Heart right ventricle (tissue), 16 donors: ENCODE measurements at regions of chr7 and their contacts with region 1.

Region 1: GRCh38 chr7:2519119-2519930 is at the start of gene LFNG:
- DNase-seq: peak; percentile 86 to 89
- ATAC-seq: peak; percentile 72 to 92 (median 84)
- H3K4me3 ChIP-seq: peak within 1 kb of the TSS; percentile 33 to 82 (median 66)
- H3K27ac ChIP-seq: peak within 1 kb of the TSS in 9 of 10 donors; percentile 11 to 87 (median 62)
- H3K4me1 ChIP-seq: peaks cover 20 to 73% (median 54%) of the 10 kb centered on the region in 9 donors
- H3K27me3 ChIP-seq: peaks cover 0 to 30% (median 6%) of the 10 kb centered on the region in 7 donors
- CTCF ChIP-seq: peak in 1 of 9 donors; percentile 10
- total RNA-seq, gene LFNG: 2.4 to 11.8 (median 9.0) TPM

Region 2: DNA sequence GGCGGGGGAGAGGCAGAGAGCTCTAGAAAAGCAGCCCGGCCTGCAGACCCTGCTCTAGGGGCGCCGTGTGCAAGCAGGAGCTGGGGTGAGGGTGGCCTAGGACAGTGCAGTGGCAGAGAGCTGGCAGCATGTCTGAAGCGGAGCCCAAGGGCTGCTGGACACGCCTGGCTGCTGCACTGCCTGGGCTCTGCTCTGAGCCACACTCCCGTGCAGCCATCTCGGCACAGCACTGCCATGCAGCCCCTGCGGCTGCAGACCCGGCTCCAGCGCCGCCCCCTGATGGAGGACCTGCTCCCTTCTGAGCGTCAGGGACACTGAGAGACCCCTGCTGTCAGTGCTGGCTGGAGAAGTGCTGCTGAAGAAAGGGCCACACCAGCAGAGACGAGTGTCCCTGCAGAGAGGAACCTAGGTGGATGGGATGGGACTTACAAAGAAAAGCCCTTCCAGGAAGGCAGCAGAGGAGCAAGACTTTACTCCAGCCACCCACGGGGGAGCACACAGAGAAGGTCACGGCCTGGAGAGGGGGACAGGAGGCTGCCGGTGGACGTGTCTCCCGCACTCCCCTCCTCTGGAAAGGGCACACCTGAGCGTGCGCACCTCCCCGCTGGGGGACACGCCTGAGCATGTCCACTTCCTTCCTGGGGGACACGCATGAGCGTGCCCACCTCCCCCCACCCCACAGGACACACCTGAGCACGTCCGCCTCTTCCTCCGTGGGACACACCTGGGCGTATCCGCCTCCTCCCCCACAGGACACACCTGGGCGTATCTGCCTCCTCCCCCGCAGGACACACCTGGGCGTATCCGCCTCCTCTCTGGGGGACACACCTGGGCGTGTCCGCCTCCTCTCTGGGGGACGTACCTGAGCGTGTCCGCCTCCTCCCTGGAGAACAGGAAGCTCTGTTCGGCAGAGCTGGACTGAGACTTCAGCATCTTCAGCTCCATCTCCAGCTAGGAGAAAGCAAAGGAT is 539.4 kb before region 1 on chr7:
- intact Hi-C with region 1: no loop called
- DNase-seq: peak in 1 of 2 donors; percentile 9
- ATAC-seq: peak in 3 of 8 donors; percentile 19 to 30 (median 20)
- H3K4me3 ChIP-seq: no peak overlapping the region
- H3K27ac ChIP-seq: no peak overlapping the region
- H3K4me1 ChIP-seq: peaks cover 0 to under 1% (median 0%) of the 10 kb centered on the region in 9 donors
- H3K27me3 ChIP-seq: no peaks in the 10 kb centered on the region
- CTCF ChIP-seq: no peak

Region 3: DNA sequence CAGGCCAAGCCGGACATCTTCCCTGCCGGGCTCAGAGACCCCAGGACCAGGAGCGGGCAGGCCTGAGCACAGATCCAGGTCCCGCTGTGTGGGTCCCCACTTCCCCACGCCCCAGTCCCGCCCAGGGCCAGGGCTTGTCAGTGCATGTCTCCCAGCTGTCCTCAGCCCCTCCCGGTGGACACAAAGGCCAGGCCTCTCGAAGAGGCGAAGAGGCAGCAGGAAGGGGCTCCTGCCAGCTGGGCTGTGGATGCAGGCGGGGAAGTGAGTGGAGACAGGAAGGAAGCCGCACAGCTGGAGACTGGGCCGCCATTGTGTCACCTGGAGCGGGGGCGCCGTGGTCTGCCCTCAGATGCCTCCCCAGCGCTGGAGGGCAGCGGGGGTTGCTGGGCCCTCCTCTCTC is 47.9 kb before region 1 on chr7:
- intact Hi-C with region 1: loop called in 4 of 10 experiments (anchors 5 kb)
- DNase-seq: peak; percentile 63 to 77
- ATAC-seq: peak; percentile 47 to 81 (median 72)
- H3K4me3 ChIP-seq: no peak overlapping the region
- H3K27ac ChIP-seq: peak overlapping the region in 6 of 10 donors; percentile 29 to 75 (median 37)
- H3K4me1 ChIP-seq: peaks cover 5 to 28% (median 10%) of the 10 kb centered on the region in 9 donors
- H3K27me3 ChIP-seq: peaks cover 0 to 19% (median 0%) of the 10 kb centered on the region in 7 donors
- CTCF ChIP-seq: no peak

Region 4: GRCh38 chr7:2477447-2478398 is 41.6 kb before region 1 on chr7:
- intact Hi-C with region 1: loop called in 5 of 10 experiments (anchors 5 kb)
- DNase-seq: peak; percentile 64 to 77
- ATAC-seq: peak; percentile 82 to 90 (median 86)
- H3K4me3 ChIP-seq: peak overlapping the region in 2 of 10 donors; percentile 7 to 15
- H3K27ac ChIP-seq: peak overlapping the region in 4 of 10 donors; percentile 14 to 56 (median 26)
- H3K4me1 ChIP-seq: peaks cover 14 to 37% (median 29%) of the 10 kb centered on the region in 9 donors
- H3K27me3 ChIP-seq: peaks cover 0 to 21% (median 8%) of the 10 kb centered on the region in 7 donors
- CTCF ChIP-seq: peak; percentile 60 to 89 (median 77)

Region 5: DNA sequence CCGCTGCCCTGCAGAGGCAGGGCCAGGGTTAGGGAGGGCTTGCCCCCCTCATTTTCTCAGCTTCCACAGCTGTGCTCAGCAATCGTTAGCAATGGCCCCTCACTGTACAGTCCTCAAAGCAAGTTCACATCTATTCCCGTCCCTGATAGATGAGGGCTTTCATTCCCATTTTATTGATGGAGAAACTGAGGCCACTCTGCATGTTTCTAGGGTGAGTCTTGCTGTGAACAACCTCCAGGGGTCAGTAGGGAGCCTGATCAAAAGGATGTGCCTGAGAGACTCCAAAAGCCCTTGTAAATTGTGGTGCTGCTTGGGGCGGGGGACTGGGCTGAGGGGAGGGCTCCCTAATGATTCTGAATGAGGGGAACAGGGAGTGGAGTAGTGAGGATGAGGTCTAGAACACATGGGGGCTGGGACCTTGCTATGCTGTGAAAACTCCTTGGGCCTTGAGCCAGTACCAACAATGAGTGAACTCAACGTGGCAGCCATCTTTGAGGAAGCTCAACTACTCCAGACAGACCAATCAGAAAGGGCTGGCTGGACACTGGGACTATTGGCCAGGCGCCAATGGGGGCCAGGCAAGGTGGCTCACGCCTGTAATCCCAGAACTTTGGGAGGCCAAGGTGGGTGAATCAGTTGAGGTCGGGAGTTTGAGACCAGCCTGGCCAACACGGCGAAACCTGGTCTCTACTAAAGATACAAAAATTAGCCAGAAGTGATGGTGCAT is 36.4 kb before region 1 on chr7:
- intact Hi-C with region 1: loop called in 5 of 10 experiments (anchors 5 kb)
- DNase-seq: no peak
- ATAC-seq: no peak
- H3K4me3 ChIP-seq: no peak overlapping the region
- H3K27ac ChIP-seq: no peak overlapping the region
- H3K4me1 ChIP-seq: peaks cover 15 to 54% (median 30%) of the 10 kb centered on the region in 9 donors
- H3K27me3 ChIP-seq: peaks cover 0 to 10% (median 5%) of the 10 kb centered on the region in 7 donors
- CTCF ChIP-seq: peak in 1 of 9 donors; percentile 13

Region 6: DNA sequence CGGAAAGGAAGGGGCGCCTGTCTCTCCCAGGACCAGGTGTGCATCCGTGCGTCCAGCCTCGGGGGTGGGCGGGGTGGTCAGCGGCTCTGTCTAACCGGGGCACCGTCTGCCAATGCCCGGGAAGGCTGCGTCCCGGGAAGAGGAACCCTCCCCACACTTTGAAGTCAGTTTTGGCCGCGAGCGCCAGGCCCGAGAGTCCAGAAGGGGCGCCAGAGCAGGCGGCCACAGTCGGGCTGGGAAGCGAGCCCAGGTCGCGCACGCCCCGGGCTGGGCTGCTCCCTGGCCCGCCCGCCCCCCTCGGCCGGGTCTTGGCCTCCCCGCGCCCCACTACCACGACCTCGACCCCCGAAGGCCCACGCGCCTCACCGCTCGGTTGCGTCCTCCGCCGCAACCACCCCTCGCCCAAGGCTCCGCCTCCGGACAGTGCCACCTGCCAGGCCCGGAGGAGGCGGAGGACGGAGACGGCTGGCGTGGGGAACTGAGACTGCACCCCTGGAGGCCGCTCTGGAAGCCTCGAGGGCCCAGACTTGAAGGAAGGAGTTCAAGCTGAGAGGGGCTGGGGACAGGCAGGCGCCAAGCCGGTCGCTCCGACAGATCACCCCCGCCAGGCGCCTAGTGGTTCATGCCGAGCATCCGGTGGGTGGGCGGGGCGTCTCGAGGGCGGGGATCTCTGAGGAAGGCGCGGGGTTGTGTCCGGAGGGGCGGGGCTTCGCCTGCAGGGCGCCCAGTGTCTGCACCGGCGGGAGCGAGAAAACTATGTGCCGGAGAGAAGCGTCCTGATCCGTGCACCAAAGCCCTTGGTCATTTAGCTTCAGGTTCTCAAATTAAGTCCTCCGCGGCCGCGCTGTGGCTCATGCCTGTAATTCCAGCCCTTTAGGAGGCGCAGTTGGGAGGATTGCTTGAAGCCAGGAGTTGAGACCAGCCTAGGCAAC is 36.1 kb after region 1 on chr7 and contains the start of gene BRAT1:
- intact Hi-C with region 1: loop called in 1 of 10 experiments (anchors 5 kb)
- DNase-seq: peak; percentile 97 to 98
- ATAC-seq: peak; percentile 91 to 97 (median 94)
- H3K4me3 ChIP-seq: peak within 1 kb of the TSS; percentile 86 to 99 (median 92)
- H3K27ac ChIP-seq: peak within 1 kb of the TSS; percentile 95 to 100 (median 100)
- H3K4me1 ChIP-seq: peaks cover 0 to 62% (median 36%) of the 10 kb centered on the region in 9 donors
- H3K27me3 ChIP-seq: no peaks in the 10 kb centered on the region
- CTCF ChIP-seq: peak; percentile 16 to 71 (median 45)
- total RNA-seq, gene BRAT1: 10.6 to 18.2 (median 12.8) TPM

Region 7: DNA sequence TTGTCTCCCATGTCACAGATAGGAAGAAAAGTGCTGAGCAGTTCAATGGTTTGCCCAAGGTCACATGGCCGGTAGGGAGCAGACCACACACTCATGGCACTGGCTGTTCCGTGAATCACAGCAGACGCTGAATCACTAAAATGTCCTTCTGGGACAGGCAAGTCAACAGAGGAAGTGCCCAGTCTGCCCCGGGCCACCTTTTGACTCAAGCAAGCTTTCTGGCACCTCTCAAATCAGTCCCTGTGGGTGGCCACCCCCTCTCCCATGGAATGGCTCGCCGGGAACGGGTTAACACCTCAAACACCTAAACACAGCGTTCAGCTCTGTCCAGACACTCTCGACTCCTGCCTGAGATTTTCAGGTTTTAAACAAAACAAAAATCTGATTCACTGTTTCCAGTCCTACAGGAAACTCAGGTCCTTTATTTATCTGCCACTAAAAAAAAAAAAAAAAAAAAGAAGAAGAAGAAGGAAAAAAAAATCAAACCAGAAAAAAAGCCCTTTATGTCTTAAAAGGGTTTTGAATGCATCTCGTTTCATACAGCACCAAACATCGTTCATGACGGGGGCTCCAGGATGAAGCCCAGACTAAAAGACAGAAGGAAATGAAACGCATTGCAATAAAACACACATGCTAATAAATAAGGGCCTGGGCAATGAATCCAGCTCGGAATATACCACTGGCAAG is 508.9 kb after region 1 on chr7:
- intact Hi-C with region 1: no loop called
- DNase-seq: no peak
- ATAC-seq: peak in 3 of 8 donors; percentile 40 to 73 (median 61)
- H3K4me3 ChIP-seq: no peak overlapping the region
- H3K27ac ChIP-seq: no peak overlapping the region
- H3K4me1 ChIP-seq: peaks cover 0 to 5% (median 0%) of the 10 kb centered on the region in 9 donors
- H3K27me3 ChIP-seq: peaks cover 0 to 28% (median 13%) of the 10 kb centered on the region in 7 donors
- CTCF ChIP-seq: no peak